Dorsolateral prefrontal cortex (tissue), 120 donors: ENCODE measurements at regions of chr1 and their contacts with region 1.

Region 1: GRCh38 chr1:243343970-243344937 is 88.4 kb downstream of the SDCCAG8 start:
- DNase-seq: peak in 1 of 10 donors; percentile 25
- H3K4me3 ChIP-seq: no peak overlapping the region
- H3K27ac ChIP-seq: peak overlapping the region in 3 of 59 donors; percentile 3 to 30 (median 13)
- H3K27me3 ChIP-seq: no peaks in the 10 kb centered on the region
- CTCF ChIP-seq: peak; percentile 59 to 95 (median 82)

Region 2: DNA sequence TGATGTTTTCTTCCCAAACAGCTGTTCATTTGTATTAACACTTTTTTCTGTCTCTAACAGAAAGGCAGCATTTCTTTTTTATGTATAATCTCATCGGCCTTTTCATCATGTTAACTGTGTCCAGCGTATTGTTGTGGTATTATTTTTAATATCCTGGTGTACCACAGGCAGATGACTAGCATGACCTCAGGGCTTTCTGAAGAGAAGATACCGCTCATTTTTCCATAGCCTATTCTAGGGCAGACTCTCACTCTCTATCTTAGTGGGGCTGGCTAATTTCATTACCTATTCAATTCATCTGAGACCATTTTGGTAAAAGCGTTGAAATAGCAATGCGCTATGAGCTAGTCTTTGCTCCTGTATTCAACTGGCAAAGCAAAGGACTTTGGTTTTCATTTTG is 121.5 kb after region 1 on chr1:
- intact Hi-C with region 1: loop called (anchors 5 kb)
- DNase-seq: no peak
- H3K4me3 ChIP-seq: no peak overlapping the region
- H3K27ac ChIP-seq: peak overlapping the region in 26 of 59 donors; percentile 4 to 67 (median 38)
- H3K27me3 ChIP-seq: no peaks in the 10 kb centered on the region
- CTCF ChIP-seq: no peak

Region 3: DNA sequence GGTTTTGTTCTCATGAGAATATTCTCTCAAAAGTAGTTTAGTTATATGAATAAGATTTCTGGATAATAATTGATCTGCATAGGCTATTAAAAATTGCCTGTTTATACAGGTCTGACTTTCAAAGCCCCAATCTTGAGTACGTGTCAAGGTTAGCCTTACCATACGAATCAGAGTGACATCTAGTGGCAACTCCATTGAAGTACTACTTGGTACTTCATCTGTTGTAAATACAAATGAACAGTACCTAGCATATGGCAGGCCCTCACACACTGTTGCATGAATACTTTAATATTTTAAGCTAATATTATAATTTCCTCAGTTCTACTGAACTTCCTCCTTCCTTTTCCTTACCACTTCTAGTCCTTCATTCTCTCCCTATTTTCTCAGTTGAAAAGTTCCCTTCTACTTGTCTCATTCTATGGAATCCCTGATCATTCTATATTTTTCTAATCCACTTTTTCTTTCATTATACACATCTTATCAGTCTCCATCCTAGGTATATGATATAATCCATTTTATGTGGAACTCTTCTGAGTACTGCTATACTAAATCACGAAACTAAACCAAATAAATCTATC is 404.5 kb after region 1 on chr1:
- intact Hi-C with region 1: loop called in 1 of 2 experiments (anchors 10 kb)
- DNase-seq: peak in 1 of 10 donors; percentile 46
- H3K4me3 ChIP-seq: no peak overlapping the region
- H3K27ac ChIP-seq: peak overlapping the region in 5 of 59 donors; percentile 1 to 35 (median 9)
- H3K27me3 ChIP-seq: no peaks in the 10 kb centered on the region
- CTCF ChIP-seq: peak; percentile 66 to 96 (median 86)